Heart right ventricle (tissue), 16 donors: ENCODE measurements at regions of chr18 and their contacts with region 1.

Region 1: DNA sequence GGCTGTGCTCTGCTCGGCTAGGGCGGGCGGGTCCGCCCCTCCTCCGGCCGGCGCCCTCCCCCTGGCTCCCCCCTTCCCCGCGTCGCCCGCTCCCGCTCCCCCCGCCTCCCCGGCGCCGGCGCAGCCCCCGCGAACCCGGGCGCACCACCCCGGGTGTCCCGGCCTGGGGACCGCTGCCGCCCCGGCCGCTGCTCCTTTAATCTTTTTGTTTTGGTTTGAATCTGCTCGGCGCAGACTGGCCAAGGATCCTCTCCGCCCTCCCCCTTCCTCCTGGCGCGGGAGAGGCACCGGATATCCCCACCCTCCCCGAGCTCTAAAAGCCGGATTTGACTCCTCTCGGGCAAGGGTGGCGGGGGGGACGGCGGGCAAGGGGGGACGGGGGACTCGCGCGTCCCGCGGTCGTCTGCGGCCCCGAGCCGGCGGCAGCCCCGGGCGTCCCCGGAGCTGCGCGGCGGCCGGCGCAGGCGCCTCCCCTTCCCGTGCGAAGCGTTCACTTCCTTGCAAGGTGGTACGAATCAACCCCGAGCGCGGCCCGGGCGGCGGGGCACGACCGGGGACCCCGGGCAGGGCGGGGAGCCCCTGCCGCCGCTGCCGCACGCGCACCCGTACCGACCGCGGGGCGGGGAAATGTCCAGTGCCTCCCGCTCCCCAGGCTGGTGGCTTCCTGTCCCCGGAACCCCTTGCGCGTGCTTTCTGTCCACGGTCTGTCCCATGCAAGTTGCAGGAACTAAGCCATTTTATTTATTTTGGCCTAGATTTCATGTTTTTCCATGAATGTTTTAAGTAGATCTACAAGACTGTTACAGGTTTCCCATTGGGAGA is at the start of gene PTGR3:
- DNase-seq: peak; percentile 87 to 93
- ATAC-seq: peak; percentile 54 to 82 (median 72)
- H3K4me3 ChIP-seq: peak within 1 kb of the TSS; percentile 74 to 99 (median 94)
- H3K27ac ChIP-seq: peak within 1 kb of the TSS; percentile 99 to 100 (median 100)
- H3K4me1 ChIP-seq: peaks cover 9 to 68% (median 59%) of the 10 kb centered on the region in 9 donors
- H3K27me3 ChIP-seq: no peaks in the 10 kb centered on the region
- CTCF ChIP-seq: no peak
- total RNA-seq, gene PTGR3: 48.5 to 71.3 (median 58.8) TPM

Region 2: DNA sequence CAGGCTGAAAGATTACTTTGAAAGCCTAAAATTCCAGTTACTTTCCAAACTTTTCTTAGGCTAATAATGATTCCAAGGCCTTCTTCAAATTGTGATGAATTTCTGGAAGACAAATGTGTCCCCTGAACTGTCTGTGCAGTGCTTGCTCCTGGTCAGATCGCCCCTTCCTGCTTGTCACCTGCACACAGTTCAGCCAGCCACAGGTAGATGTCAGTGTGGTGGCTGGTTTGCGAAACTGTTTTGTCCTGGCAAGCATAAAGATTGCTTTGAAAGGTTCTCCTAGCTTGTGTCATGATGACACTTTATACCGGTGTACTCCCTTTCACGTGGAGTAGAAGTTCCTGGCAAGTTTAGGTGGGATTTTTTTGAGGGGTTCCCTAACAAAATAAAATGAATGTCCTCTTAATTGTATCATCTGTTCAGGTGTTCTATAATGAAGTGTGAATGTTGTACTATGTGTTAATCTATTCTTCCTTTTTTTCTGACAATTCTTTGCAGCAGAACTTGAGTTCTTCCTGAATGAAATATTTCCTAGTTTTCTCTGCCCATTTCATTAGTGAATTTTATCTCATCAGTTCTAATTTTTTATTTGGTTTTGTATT is 312.8 kb before region 1 on chr18:
- intact Hi-C with region 1: loop called in 1 of 10 experiments (anchors 10 kb)
- DNase-seq: peak in 1 of 2 donors; percentile 12
- ATAC-seq: peak in 6 of 8 donors; percentile 58 to 86 (median 78)
- H3K4me3 ChIP-seq: no peak overlapping the region
- H3K27ac ChIP-seq: no peak overlapping the region
- H3K4me1 ChIP-seq: peaks cover 0 to 26% (median 0%) of the 10 kb centered on the region in 9 donors
- H3K27me3 ChIP-seq: no peaks in the 10 kb centered on the region
- CTCF ChIP-seq: peak in 8 of 9 donors; percentile 26 to 66 (median 58)

Region 3: GRCh38 chr18:75041586-75041985 is 167.8 kb before region 1 on chr18:
- intact Hi-C with region 1: loop called in 1 of 10 experiments (anchors 10 kb)
- DNase-seq: no peak
- ATAC-seq: no peak
- H3K4me3 ChIP-seq: no peak overlapping the region
- H3K27ac ChIP-seq: no peak overlapping the region
- H3K4me1 ChIP-seq: peaks cover 0 to 7% (median 0%) of the 10 kb centered on the region in 9 donors
- H3K27me3 ChIP-seq: no peaks in the 10 kb centered on the region
- CTCF ChIP-seq: peak in 6 of 9 donors; percentile 16 to 39 (median 31)

Region 4: GRCh38 chr18:75173125-75173432 is 36.3 kb before region 1 on chr18:
- intact Hi-C with region 1: loop called in 3 of 10 experiments (anchors 2 to 5 kb)
- DNase-seq: no peak
- ATAC-seq: no peak
- H3K4me3 ChIP-seq: no peak overlapping the region
- H3K27ac ChIP-seq: peak overlapping the region in 2 of 10 donors; percentile 26 to 86
- H3K4me1 ChIP-seq: peaks cover 5 to 43% (median 14%) of the 10 kb centered on the region in 9 donors
- H3K27me3 ChIP-seq: no peaks in the 10 kb centered on the region
- CTCF ChIP-seq: peak in 3 of 9 donors; percentile 15 to 31 (median 17)

Region 5: GRCh38 chr18:75293591-75293990 is 84.3 kb after region 1 on chr18:
- intact Hi-C with region 1: no loop called
- DNase-seq: no peak
- ATAC-seq: no peak
- H3K4me3 ChIP-seq: no peak overlapping the region
- H3K27ac ChIP-seq: no peak overlapping the region
- H3K4me1 ChIP-seq: peaks cover 0 to 3% (median 0%) of the 10 kb centered on the region in 9 donors
- H3K27me3 ChIP-seq: no peaks in the 10 kb centered on the region
- CTCF ChIP-seq: no peak

Region 6: GRCh38 chr18:75478996-75479880 is 269.9 kb after region 1 on chr18:
- intact Hi-C with region 1: loop called in 3 of 10 experiments (anchors 5 to 10 kb)
- DNase-seq: no peak
- ATAC-seq: peak in 7 of 8 donors; percentile 68 to 85 (median 71)
- H3K4me3 ChIP-seq: no peak overlapping the region
- H3K27ac ChIP-seq: no peak overlapping the region
- H3K4me1 ChIP-seq: no peaks in the 10 kb centered on the region
- H3K27me3 ChIP-seq: no peaks in the 10 kb centered on the region
- CTCF ChIP-seq: peak; percentile 29 to 90 (median 72)